Dorsolateral prefrontal cortex (tissue), 120 donors: ENCODE measurements at regions of chr12 and their contacts with region 1.

Region 1: DNA sequence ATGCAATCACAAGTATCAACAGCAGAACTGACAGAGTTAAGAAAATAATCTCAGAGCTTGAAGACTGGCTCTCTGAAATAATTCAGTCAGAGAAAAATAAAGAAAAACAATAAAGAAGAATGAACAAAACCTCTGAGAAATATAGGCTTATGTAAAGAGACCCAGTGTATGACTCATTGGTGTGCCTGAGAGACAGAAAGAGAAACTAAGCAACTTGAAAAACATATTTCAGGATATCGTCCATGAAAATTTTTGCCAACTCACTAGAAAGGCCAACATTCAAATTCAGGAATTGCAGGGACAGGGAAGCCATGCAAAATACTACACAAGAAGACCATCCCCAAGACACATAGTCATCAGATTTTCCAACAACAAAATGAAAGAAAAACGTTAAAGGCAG is 56.2 kb downstream of the APOBEC1 start:
- DNase-seq: no peak
- H3K4me3 ChIP-seq: no peak overlapping the region
- H3K27ac ChIP-seq: no peak overlapping the region
- H3K27me3 ChIP-seq: no peaks in the 10 kb centered on the region
- CTCF ChIP-seq: no peak

Region 2: GRCh38 chr12:7834701-7835100 is 225.2 kb after region 1 on chr12:
- intact Hi-C with region 1: no loop called
- DNase-seq: no peak
- H3K4me3 ChIP-seq: no peak overlapping the region
- H3K27ac ChIP-seq: no peak overlapping the region
- H3K27me3 ChIP-seq: no peaks in the 10 kb centered on the region
- CTCF ChIP-seq: no peak

Region 3: DNA sequence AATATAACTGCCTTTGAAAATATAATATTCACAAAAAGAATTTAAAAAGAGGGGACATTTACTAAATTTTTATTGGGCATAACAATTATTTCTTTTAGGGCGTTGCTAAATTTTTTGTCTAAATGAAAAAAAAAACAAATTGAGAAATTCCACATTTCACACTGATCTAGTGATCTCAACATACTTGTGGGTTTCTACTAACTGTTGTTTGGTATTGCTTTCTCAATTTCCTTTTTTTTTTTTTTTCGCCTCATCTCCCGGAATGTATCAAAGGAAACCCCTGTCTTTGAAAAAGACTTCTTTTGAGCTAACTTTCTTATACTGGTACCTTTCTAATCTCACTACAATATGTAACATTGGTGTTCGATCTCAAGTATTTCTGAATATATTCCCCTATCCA is 903.8 kb after region 1 on chr12 and contains the start of gene CLEC4D:
- intact Hi-C with region 1: loop called in 1 of 2 experiments (anchors 5 kb)
- DNase-seq: no peak
- H3K4me3 ChIP-seq: no peak within 1 kb of the TSS
- H3K27ac ChIP-seq: no peak within 1 kb of the TSS
- H3K27me3 ChIP-seq: peaks cover 0 to 13% (median 0%) of the 10 kb centered on the region in 45 donors
- CTCF ChIP-seq: no peak
- total RNA-seq, gene CLEC4D: 0.23 to 1.9 (median 0.55) TPM in 25 of 120 experiments, not detected in the others